AG04449 (cell line): ENCODE measurements at regions of chr4 and their contacts with region 1.

Region 1: GRCh38 chr4:41692717-41693345 is 55.7 kb downstream of the PHOX2B start:
- DNase-seq: peak; percentile 5
- H3K4me3 ChIP-seq: no peak overlapping the region
- CTCF ChIP-seq: peak; percentile 83

Region 2: DNA sequence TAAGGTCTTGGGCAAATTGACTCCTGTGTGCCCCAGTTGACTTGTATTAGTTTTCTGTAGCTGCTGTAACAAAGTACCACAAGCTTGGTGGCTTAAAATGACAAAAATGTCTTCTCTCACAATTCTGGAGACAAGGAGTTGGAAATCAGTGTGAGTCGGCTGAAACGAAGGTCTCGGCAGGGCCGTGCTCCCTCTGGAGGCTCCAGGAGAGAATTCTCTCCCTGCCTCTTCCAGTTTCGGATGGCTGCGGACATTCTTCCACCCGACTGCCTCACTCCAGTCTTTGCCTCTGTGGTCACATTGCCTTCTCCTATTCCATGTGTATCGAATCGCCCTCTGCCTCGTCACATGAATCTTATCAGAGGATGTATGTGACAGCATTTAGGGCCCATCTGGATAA is 121.7 kb after region 1 on chr4:
- CTCF ChIA-PET with region 1: interaction called, 20 read pairs
- POLR2A ChIA-PET with region 1: no interaction called
- DNase-seq: peak; percentile 2
- H3K4me3 ChIP-seq: no peak overlapping the region
- CTCF ChIP-seq: peak; percentile 56

Region 3: DNA sequence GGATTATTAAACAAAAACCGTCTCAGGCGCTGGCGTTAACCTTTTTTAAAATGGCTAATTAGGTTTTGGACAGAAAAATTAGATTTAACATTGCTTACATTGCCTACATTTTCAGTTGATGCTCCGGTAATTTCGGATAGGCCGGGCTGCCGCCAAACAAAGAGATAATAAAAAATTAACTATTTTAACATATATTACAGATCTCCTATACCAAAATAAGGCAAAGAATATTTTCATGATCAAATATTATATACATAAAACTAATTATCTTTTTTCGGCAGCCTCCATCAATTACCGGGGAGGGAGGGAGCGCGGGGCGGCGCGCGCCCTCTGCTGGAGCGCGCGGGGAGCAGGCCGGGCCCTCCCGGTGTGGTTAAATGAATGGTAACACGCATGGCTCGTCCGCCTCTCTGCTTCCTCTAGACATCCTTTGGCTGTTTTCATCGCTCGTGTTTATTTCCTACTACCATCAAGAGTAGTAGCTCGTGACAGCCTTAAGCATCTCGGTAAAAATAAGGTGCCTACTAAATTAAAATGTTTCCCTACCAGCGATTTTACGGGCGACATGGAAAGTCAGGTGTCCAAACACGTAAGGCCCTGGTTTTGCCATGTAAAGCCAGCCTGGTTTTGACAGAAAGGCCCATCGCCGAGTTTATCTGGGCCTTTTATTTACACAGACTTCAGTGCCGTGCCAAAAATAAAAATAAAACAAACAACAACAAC is 190.0 kb after region 1 on chr4:
- CTCF ChIA-PET with region 1: interaction called, 147 read pairs
- POLR2A ChIA-PET with region 1: no interaction called
- DNase-seq: no peak
- H3K4me3 ChIP-seq: no peak overlapping the region
- CTCF ChIP-seq: peak; percentile 83